Thyroid gland (tissue), 4 donors: ENCODE measurements at regions of chr7 and their contacts with region 1.

Region 1: GRCh38 chr7:16645593-16646471 is at the starts of genes ANKMY2 and BZW2:
- DNase-seq: peak; percentile 97
- H3K4me3 ChIP-seq: peak within 1 kb of the TSS; percentile 83 to 97 (median 91)
- H3K27ac ChIP-seq: peak within 1 kb of the TSS; percentile 85 to 97 (median 95)
- H3K4me1 ChIP-seq: peaks cover 30 to 43% of the 10 kb centered on the region in 2 donors
- H3K27me3 ChIP-seq: no peaks in the 10 kb centered on the region
- CTCF ChIP-seq: peak in 1 of 6 experiments; percentile 9
- POLR2A ChIP-seq: peak; percentile 96 to 99
- total RNA-seq, gene ANKMY2: 21.2 to 35.1 (median 23.9) TPM
- total RNA-seq, gene BZW2: 63.0 to 69.0 (median 66.8) TPM

Region 2: DNA sequence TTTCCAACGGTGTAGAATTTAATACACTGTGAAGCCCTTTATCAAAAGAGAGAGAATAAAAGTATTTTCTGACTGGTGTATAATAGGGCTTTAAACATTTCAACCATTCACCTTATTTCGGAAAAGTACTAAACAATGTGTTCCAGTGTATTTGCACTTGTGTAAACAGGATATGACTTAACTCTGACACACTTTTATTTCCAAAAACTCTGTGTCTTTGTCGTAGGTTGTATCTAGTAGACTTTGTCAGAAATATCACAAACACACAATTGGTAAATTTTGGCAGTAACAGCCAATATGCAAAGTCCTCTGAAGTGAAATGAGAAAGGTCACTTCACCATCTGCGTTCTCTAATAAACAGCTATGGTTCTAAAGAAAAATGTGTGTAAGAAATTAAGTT is 97.4 kb after region 1 on chr7:
- intact Hi-C with region 1: no loop called
- DNase-seq: no peak
- H3K4me3 ChIP-seq: no peak overlapping the region
- H3K27ac ChIP-seq: no peak overlapping the region
- H3K4me1 ChIP-seq: no peaks in the 10 kb centered on the region
- H3K27me3 ChIP-seq: no peaks in the 10 kb centered on the region
- CTCF ChIP-seq: no peak
- POLR2A ChIP-seq: no peak

Region 3: GRCh38 chr7:16753102-16753931 is 107.5 kb after region 1 on chr7 and contains the start of gene TSPAN13:
- intact Hi-C with region 1: loop called (anchors 10 kb)
- DNase-seq: peak; percentile 95 to 96
- H3K4me3 ChIP-seq: peak within 1 kb of the TSS; percentile 54 to 67 (median 63)
- H3K27ac ChIP-seq: peak within 1 kb of the TSS in 2 of 3 donors; percentile 62 to 74
- H3K4me1 ChIP-seq: peaks cover 10 to 14% of the 10 kb centered on the region in 2 donors
- H3K27me3 ChIP-seq: no peaks in the 10 kb centered on the region
- CTCF ChIP-seq: no peak
- POLR2A ChIP-seq: peak in 1 of 2 donors; percentile 94
- total RNA-seq, gene TSPAN13: 16.8 to 31.1 (median 28.2) TPM